Activated B cell treated with CpG ODN at 0.5 μM for 24 hours (primary cell): ENCODE measurements at regions of chr17 and their contacts with region 1.

Region 1: GRCh38 chr17:1783834-1784611 is 22.2 kb downstream of the SERPINF1 start:
- DNase-seq: no peak
- ATAC-seq: peak; percentile 90
- H3K4me3 Mint-ChIP-seq: peak overlapping the region; percentile 44
- H3K27ac Mint-ChIP-seq: peak overlapping the region; percentile 84
- H3K4me1 Mint-ChIP-seq: peaks cover 33% of the 10 kb centered on the region
- H3K27me3 Mint-ChIP-seq: no peaks in the 10 kb centered on the region
- CTCF ChIP-seq: no peak

Region 2: DNA sequence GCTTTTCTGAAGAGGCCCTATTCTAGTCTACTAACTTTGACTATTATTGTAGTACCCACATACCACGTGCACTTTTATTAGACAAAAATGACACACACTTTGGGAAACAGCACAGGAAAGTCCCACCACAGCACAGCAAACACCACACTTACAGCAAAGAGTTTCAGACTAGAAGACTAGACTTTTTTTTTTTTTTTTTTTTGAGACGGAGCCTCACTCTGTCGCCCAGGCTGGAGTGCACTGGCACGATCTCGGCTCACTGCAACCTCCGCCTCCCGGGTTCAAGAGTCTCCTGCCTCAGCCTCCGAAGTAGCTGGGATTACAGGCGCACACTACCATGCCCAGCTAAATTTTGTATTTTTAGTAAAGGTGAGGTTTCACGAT is 404.1 kb before region 1 on chr17:
- CTCF ChIA-PET with region 1: no interaction called
- POLR2A ChIA-PET with region 1: no interaction called
- intact Hi-C with region 1: no loop called
- DNase-seq: no peak
- ATAC-seq: peak; percentile 61
- H3K4me3 Mint-ChIP-seq: peak overlapping the region; percentile 42
- H3K27ac Mint-ChIP-seq: peak overlapping the region; percentile 71
- H3K4me1 Mint-ChIP-seq: peaks cover 76% of the 10 kb centered on the region
- H3K27me3 Mint-ChIP-seq: no peaks in the 10 kb centered on the region
- CTCF ChIP-seq: no peak

Region 3: GRCh38 chr17:1573916-1574696 is 209.9 kb before region 1 on chr17:
- CTCF ChIA-PET with region 1: interaction called, 11 read pairs
- POLR2A ChIA-PET with region 1: no interaction called
- intact Hi-C with region 1: no loop called
- DNase-seq: peak; percentile 87
- ATAC-seq: peak; percentile 70
- H3K4me3 Mint-ChIP-seq: no peak overlapping the region
- H3K27ac Mint-ChIP-seq: no peak overlapping the region
- H3K4me1 Mint-ChIP-seq: peaks cover 25% of the 10 kb centered on the region
- H3K27me3 Mint-ChIP-seq: no peaks in the 10 kb centered on the region
- CTCF ChIP-seq: no peak

Region 4: DNA sequence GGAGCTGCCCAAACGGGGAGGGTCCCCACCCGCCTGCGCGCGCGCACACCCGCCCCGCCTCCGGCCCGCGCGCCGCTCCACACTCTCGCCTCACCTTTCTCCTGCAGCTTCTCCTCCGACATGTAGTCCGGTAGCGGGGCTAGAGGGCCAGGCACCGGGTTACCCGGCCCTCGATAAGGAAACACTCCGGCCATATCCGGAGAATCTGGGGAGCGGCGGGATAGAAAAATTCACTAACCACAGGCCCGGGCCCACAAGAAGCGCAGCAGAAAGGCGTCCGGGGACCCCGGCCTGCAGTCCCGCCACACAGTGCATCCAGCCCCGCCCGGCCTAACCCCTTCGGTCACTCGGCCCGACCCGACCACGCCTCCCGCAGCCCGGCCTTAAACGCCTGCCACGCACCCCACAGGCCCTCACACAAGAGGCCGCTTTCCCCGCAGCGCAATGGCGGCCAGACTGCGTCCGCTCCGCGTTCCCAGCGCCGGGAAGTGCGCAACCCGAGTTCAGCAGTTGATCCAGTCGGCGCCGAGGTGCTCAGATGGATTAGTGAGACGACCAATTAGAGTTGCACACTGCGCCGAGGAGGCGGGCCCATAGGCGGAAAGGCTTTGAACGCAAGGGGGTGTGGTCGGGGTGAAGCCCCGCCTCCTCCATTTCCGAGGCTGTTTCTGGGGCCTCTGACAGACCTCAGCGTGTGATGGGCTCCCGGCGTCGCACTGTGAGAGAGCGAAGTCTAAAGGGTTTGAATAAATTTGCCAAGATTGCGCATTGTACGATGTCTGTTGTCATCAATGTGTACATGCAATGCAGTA is 99.4 kb before region 1 on chr17 and contains the start of gene PRPF8:
- CTCF ChIA-PET with region 1: interaction called, 9 read pairs
- POLR2A ChIA-PET with region 1: interaction called, 5 read pairs
- intact Hi-C with region 1: loop called (anchors 1 kb)
- DNase-seq: peak; percentile 95
- ATAC-seq: peak; percentile 99
- H3K4me3 Mint-ChIP-seq: peak within 1 kb of the TSS; percentile 100
- H3K27ac Mint-ChIP-seq: peak within 1 kb of the TSS; percentile 96
- H3K4me1 Mint-ChIP-seq: peaks cover 33% of the 10 kb centered on the region
- H3K27me3 Mint-ChIP-seq: no peaks in the 10 kb centered on the region
- CTCF ChIP-seq: no peak
- total RNA-seq, gene PRPF8: 401 and 442 TPM in 2 replicates

Region 5: GRCh38 chr17:1752425-1753262 is 31.4 kb before region 1 on chr17:
- CTCF ChIA-PET with region 1: interaction called, 44 read pairs
- POLR2A ChIA-PET with region 1: interaction called, 26 read pairs
- intact Hi-C with region 1: no loop called
- DNase-seq: no peak
- ATAC-seq: peak; percentile 86
- H3K4me3 Mint-ChIP-seq: peak overlapping the region; percentile 38
- H3K27ac Mint-ChIP-seq: no peak overlapping the region
- H3K4me1 Mint-ChIP-seq: peaks cover 15% of the 10 kb centered on the region
- H3K27me3 Mint-ChIP-seq: no peaks in the 10 kb centered on the region
- CTCF ChIP-seq: no peak

Region 6: DNA sequence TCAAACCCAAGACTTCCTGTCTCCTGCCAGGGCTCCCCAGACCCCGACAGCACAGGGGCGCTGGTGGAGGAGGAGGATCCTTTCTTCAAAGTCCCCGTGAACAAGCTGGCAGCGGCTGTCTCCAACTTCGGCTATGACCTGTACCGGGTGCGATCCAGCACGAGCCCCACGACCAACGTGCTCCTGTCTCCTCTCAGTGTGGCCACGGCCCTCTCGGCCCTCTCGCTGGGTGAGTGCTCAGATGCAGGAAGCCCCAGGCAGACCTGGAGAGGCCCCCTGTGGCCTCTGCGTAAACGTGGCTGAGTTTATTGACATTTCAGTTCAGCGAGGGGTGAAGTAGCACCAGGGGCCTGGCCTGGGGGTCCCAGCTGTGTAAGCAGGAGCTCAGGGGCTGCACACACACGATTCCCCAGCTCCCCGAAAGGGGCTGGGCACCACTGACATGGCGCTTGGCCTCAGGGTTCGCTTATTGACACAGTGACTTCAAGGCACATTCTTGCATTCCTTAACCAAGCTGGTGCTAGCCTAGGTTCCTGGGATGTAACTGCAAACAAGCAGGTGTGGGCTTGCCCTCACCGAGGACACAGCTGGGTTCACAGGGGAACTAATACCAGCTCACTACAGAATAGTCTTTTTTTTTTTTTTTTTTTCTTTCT is 14.1 kb before region 1 on chr17:
- CTCF ChIA-PET with region 1: interaction called, 35 read pairs
- POLR2A ChIA-PET with region 1: interaction called, 67 read pairs
- intact Hi-C with region 1: loop called (anchors 1 kb)
- DNase-seq: no peak
- ATAC-seq: peak; percentile 46
- H3K4me3 Mint-ChIP-seq: peak overlapping the region; percentile 58
- H3K27ac Mint-ChIP-seq: peak overlapping the region; percentile 82
- H3K4me1 Mint-ChIP-seq: peaks cover 52% of the 10 kb centered on the region
- H3K27me3 Mint-ChIP-seq: no peaks in the 10 kb centered on the region
- CTCF ChIP-seq: no peak